ENCODE measurements at regions of chr9 and their contacts with region 1.

Region 1: DNA sequence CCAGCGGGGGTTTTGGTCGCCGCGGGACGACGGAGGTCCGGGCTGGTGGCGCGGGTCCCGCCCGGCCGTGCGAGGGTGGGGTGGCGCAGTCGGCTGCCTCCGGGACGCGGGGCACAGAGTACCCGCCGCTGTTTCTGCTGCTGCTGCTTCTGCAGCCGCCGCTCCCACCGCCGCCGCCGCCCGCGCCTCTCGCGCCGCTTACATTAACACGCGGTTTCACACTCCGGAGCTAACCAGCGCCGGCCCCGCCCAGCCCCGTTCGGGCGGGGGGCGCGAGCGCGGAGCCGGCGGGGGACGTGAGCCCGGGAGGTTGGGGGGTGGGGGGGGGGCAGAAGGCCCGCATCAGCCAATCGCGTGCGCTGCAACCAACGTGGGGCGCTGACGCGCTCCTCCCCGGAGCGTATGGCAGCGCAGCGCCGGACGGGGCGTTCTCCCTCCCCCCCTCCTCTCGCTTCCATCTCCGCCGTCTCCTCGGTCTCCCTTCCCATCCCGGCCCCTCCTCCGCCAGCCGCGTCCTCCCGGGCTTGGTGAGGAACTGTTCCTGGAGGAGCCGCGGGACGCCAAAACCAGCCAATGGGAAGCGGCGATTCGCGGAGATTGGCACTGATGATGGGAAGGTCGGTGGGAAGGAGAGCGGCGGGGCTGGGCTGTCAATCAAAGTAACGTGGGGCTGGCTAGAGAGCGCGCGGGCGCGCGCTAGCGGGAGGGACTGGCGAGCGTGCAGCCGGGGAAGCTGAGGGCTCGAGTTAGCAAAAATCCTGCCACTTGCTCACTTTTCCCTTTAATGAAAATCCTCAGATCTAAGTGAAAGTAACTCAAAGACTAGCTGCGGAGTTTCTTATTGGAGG is at the start of gene TLE1:
- DNase-seq: peak; percentile 99 to 100
- ATAC-seq: peak; percentile 95 to 99 (median 97)
- H3K4me3 ChIP-seq: peak within 1 kb of the TSS; percentile 69 to 87 (median 74)
- H3K27ac ChIP-seq: peak within 1 kb of the TSS; percentile 73 to 92 (median 84)
- H3K4me1 ChIP-seq: peaks cover 0 to 43% (median 26%) of the 10 kb centered on the region in 9 donors
- H3K27me3 ChIP-seq: peaks cover 0 to 51% (median 0%) of the 10 kb centered on the region in 7 donors
- CTCF ChIP-seq: peak in 2 of 9 donors; percentile 15 to 18
- total RNA-seq, gene TLE1: 7.9 to 12.7 (median 11.0) TPM

Region 2: GRCh38 chr9:81521892-81522291 is 167.7 kb before region 1 on chr9:
- intact Hi-C with region 1: loop called (anchors 1 to 10 kb)
- DNase-seq: no peak
- ATAC-seq: no peak
- H3K4me3 ChIP-seq: no peak overlapping the region
- H3K27ac ChIP-seq: no peak overlapping the region
- H3K4me1 ChIP-seq: peaks cover 0 to 11% (median 0%) of the 10 kb centered on the region in 9 donors
- H3K27me3 ChIP-seq: no peaks in the 10 kb centered on the region
- CTCF ChIP-seq: no peak

Region 3: DNA sequence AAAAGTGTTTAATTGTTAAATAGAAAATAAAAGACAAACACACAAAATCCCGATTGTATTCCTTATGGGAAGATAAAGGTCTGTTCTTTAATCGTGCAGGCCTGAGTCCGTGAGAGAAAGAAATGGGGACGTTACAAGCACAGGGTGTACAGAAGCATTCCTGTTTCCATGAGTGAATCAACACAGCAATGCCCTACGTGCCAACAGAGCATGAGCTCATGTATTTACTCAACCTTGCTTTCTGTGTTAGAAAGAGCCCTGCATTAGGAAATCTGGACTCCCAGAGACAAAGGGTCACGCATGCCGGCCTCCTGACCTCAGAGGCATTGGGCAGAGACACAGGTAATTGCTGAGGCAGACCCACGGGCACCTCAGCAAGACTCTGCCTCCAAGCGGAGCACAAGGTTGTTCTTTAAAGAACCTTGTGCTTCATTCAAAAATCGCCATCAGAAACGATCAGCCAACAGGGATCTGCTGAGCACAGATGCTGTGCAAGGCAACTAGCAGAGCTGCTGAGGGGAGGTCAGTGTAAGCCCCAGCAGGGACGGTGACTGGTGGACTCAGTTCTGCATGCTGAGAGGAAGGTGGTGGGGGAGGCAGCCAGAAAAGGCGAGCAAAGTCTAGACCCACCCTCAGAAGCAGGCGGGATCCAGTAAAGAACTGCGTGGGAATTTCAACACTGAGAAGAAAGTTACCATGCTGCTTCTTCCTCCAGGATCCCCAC is 101.3 kb before region 1 on chr9:
- intact Hi-C with region 1: loop called in 4 of 10 experiments (anchors 10 kb)
- DNase-seq: no peak
- ATAC-seq: peak in 7 of 8 donors; percentile 29 to 88 (median 56)
- H3K4me3 ChIP-seq: no peak overlapping the region
- H3K27ac ChIP-seq: no peak overlapping the region
- H3K4me1 ChIP-seq: peaks cover 0 to 26% (median 18%) of the 10 kb centered on the region in 9 donors
- H3K27me3 ChIP-seq: no peaks in the 10 kb centered on the region
- CTCF ChIP-seq: no peak

Region 4: DNA sequence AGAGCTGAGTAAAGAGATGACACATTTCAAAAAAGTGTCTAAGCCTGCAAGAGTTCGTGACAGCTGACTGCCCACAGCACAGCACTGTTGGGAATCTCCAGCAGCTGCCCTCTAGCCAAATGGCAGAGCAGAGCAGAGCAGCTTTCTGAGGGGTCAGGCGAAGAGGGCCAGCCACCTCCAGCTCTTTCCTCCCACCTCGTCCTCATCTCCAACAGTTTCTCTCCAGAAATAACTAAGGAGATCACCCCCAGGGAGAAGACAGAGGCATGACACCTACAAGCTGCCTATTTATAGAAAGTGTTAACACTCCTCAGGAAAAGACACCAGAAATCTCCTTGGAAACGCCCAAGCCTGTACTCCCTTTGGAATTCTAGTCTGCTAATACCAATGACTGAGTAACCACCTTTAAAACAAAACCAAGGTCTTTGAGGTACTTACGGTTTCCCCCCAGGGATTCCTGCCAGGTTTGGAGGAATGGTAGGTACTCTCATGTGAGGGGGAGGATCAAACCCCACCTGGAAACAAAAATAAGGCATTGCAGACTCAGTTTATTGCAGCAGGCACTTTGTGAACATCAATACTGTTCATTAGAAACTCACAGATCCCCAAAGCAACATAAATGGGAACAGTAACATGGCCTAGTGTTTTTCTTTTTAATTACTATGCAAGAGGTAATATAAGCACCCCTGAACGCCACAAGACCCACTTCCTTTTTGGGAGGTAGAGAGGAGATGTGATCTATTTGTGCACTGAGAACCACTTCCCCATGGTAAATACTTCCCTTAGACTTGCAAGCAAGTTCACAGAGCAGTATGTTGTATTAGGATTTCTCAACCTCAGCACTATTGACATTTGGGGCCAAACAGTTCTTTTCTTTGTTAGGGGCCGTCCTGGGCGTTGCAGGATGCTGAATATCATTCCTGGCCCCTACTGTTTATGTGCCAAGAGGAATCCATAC is 79.5 kb before region 1 on chr9:
- intact Hi-C with region 1: loop called in 2 of 10 experiments (anchors 5 to 10 kb)
- DNase-seq: no peak
- ATAC-seq: no peak
- H3K4me3 ChIP-seq: no peak overlapping the region
- H3K27ac ChIP-seq: peak overlapping the region in 1 of 10 donors; percentile 5
- H3K4me1 ChIP-seq: peaks cover 3 to 27% (median 12%) of the 10 kb centered on the region in 9 donors
- H3K27me3 ChIP-seq: no peaks in the 10 kb centered on the region
- CTCF ChIP-seq: no peak

Region 5: GRCh38 chr9:81632599-81632998 is 57.0 kb before region 1 on chr9:
- intact Hi-C with region 1: no loop called
- DNase-seq: no peak
- ATAC-seq: no peak
- H3K4me3 ChIP-seq: no peak overlapping the region
- H3K27ac ChIP-seq: no peak overlapping the region
- H3K4me1 ChIP-seq: peaks cover 0 to 3% (median 0%) of the 10 kb centered on the region in 9 donors
- H3K27me3 ChIP-seq: no peaks in the 10 kb centered on the region
- CTCF ChIP-seq: no peak

Region 6: DNA sequence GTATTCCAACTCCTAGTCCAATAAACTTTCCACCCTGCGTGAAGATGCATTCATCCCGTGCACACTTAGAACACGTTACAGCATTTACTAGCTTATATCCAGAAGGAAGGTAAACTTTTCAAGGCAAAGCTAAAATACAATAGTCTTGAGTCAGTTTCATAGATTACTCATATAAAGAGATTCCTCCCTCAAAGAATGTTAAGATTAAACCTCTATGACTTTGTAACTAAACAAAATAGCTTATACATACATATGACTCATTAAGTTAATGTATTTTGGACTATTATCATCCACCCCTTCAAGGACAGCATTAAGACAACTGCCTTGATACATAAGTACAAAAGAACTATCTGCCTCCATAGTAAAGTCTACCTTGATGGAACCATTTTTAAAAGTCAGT is 36.3 kb before region 1 on chr9:
- intact Hi-C with region 1: no loop called
- DNase-seq: no peak
- ATAC-seq: no peak
- H3K4me3 ChIP-seq: no peak overlapping the region
- H3K27ac ChIP-seq: no peak overlapping the region
- H3K4me1 ChIP-seq: peaks cover 0 to 21% (median 8%) of the 10 kb centered on the region in 9 donors
- H3K27me3 ChIP-seq: no peaks in the 10 kb centered on the region
- CTCF ChIP-seq: no peak

Region 7: GRCh38 chr9:81798606-81799005 is 109.0 kb after region 1 on chr9:
- intact Hi-C with region 1: no loop called
- DNase-seq: no peak
- ATAC-seq: peak in 5 of 8 donors; percentile 37 to 77 (median 72)
- H3K4me3 ChIP-seq: no peak overlapping the region
- H3K27ac ChIP-seq: no peak overlapping the region
- H3K4me1 ChIP-seq: no peaks in the 10 kb centered on the region
- H3K27me3 ChIP-seq: peaks cover 0 to 9% (median 0%) of the 10 kb centered on the region in 7 donors
- CTCF ChIP-seq: no peak

Region 8: DNA sequence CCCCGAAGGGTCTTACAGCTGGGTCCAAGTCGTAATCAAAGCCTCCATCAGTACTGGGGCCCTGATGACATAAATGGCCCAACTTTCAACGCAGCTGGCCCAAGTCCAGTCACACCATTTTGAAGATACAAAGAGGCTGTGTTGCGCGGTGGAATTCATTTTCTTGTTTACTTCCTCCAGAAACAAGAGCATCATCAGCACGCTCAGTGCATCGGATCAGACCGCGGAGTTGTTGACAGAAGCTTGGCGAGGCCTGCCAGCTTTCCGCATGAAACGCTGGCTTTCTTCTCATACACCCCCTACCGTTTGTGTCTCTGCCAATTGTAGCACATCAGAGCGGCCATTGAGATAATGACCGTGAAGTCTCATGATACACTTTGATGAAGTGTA is 136.9 kb after region 1 on chr9:
- intact Hi-C with region 1: loop called in 1 of 10 experiments (anchors 2 kb)
- DNase-seq: peak; percentile 71 to 76
- ATAC-seq: peak; percentile 67 to 92 (median 90)
- H3K4me3 ChIP-seq: no peak overlapping the region
- H3K27ac ChIP-seq: no peak overlapping the region
- H3K4me1 ChIP-seq: peaks cover 0 to 23% (median 0%) of the 10 kb centered on the region in 9 donors
- H3K27me3 ChIP-seq: peaks cover 0 to 34% (median 17%) of the 10 kb centered on the region in 7 donors
- CTCF ChIP-seq: peak in 3 of 9 donors; percentile 21 to 33 (median 26)

Region 9: GRCh38 chr9:82488313-82489200 is 799.0 kb after region 1 on chr9:
- intact Hi-C with region 1: loop called in 2 of 10 experiments (anchors 10 kb)
- DNase-seq: peak in 1 of 2 donors; percentile 72
- ATAC-seq: peak; percentile 72 to 93 (median 90)
- H3K4me3 ChIP-seq: peak overlapping the region in 1 of 10 donors; percentile 14
- H3K27ac ChIP-seq: peak overlapping the region; percentile 51 to 89 (median 70)
- H3K4me1 ChIP-seq: peaks cover 9 to 35% (median 29%) of the 10 kb centered on the region in 9 donors
- H3K27me3 ChIP-seq: no peaks in the 10 kb centered on the region
- CTCF ChIP-seq: no peak

Measured in heart right ventricle (tissue), 16 donors.